Right cardiac atrium (tissue), 5 donors: ENCODE measurements at regions of chrX and their contacts with region 1.

Region 1: DNA sequence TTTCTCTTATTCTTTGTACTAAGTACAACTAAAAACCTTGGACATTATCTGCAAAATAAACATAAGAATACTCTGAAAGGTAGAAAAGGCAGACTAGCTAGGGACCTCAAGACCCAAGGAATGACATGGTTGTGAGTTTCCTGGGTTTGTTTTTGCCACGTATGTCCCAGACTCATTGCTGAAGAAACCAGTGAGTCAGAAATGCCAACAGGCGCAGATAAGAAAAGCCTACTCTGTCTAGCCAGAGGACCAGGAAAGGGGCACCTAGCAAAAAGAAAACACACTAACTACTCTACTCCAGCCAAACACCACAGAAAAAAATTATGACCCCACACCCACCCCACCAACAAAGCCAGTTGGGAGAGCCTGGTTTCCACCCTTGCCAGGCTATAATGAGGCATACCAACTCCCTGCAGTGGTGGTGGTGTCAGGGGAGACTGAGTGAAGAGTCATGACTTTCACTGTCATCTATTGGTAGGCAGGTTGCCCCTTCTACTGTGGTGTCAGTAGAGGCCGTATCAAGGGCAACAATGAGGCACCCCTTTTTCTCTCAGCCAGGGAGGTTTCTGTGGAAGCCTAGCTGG is 10.9 kb downstream of the MTMR1 start:
- DNase-seq: no peak
- ATAC-seq: peak in 1 of 2 donors; percentile 46
- H3K4me3 ChIP-seq: no peak overlapping the region
- H3K27ac ChIP-seq: no peak overlapping the region
- H3K4me1 ChIP-seq: peaks cover 4% of the 10 kb centered on the region
- H3K27me3 ChIP-seq: no peaks in the 10 kb centered on the region

Region 2: GRCh38 chrX:149950681-149951080 is 753.4 kb before region 1 on chrX:
- intact Hi-C with region 1: loop called in 1 of 4 experiments (anchors 10 kb)
- DNase-seq: no peak
- ATAC-seq: peak; percentile 36 to 64
- H3K4me3 ChIP-seq: no peak overlapping the region
- H3K27ac ChIP-seq: no peak overlapping the region
- H3K4me1 ChIP-seq: no peaks in the 10 kb centered on the region
- H3K27me3 ChIP-seq: no peaks in the 10 kb centered on the region